ENCODE measurements at regions of chr22 and their contacts with region 1.

Region 1: GRCh38 chr22:38239101-38239761 is 33.6 kb downstream of the TMEM184B start:
- DNase-seq: peak; percentile 70
- H3K4me3 Mint-ChIP-seq: peak overlapping the region; percentile 43
- H3K27ac Mint-ChIP-seq: peak overlapping the region; percentile 92
- H3K4me1 Mint-ChIP-seq: peaks cover 73% of the 10 kb centered on the region
- H3K27me3 Mint-ChIP-seq: no peaks in the 10 kb centered on the region
- CTCF ChIP-seq: no peak

Region 2: DNA sequence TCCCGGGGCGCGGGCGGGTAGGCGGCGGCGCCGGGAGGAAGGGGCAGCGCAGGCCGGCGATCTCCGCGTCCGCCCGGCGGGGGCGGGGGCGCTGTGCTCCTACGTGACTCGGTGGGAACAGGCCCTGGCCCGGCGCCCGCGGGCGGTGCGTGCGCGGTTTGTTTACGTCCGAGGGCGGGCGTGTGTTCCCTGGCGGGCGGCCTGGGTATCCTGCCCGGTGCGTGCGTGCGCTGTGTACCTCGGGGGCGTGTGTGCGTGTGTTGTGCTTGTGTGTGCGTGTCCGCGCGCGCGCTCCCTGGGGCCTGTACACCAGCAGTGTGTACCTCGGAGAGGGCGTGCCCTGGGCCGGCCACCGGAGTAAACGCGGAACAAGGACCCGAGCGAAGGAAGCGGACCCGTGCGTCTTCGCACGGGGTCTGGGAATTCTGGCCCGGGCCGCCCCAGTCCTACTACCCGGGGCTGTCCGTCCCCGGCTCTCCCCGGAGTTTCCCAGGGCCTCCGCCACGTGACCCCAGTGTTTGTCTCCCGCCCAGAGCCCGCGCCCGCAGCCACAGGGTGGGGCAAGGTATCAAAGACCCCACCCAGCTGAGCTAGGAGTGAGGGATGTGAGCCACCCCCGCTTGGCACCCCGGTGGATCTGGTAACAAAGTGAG is 36.7 kb before region 1 on chr22:
- CTCF ChIA-PET with region 1: interaction called, 4 read pairs
- intact Hi-C with region 1: loop called (anchors 1 kb)
- DNase-seq: peak; percentile 80
- H3K4me3 Mint-ChIP-seq: peak overlapping the region; percentile 78
- H3K27ac Mint-ChIP-seq: peak overlapping the region; percentile 82
- H3K4me1 Mint-ChIP-seq: peaks cover 39% of the 10 kb centered on the region
- H3K27me3 Mint-ChIP-seq: no peaks in the 10 kb centered on the region
- CTCF ChIP-seq: no peak

Region 3: GRCh38 chr22:38228873-38229740 is 10.1 kb before region 1 on chr22:
- CTCF ChIA-PET with region 1: interaction called, 14 read pairs
- intact Hi-C with region 1: loop called (anchors 1 kb)
- DNase-seq: peak; percentile 75
- H3K4me3 Mint-ChIP-seq: peak overlapping the region; percentile 61
- H3K27ac Mint-ChIP-seq: peak overlapping the region; percentile 99
- H3K4me1 Mint-ChIP-seq: peaks cover 33% of the 10 kb centered on the region
- H3K27me3 Mint-ChIP-seq: no peaks in the 10 kb centered on the region
- CTCF ChIP-seq: no peak

Measured in Calu3 (cell line).